ENCODE measurements at regions of chr2 and their contacts with region 1.

Region 1: DNA sequence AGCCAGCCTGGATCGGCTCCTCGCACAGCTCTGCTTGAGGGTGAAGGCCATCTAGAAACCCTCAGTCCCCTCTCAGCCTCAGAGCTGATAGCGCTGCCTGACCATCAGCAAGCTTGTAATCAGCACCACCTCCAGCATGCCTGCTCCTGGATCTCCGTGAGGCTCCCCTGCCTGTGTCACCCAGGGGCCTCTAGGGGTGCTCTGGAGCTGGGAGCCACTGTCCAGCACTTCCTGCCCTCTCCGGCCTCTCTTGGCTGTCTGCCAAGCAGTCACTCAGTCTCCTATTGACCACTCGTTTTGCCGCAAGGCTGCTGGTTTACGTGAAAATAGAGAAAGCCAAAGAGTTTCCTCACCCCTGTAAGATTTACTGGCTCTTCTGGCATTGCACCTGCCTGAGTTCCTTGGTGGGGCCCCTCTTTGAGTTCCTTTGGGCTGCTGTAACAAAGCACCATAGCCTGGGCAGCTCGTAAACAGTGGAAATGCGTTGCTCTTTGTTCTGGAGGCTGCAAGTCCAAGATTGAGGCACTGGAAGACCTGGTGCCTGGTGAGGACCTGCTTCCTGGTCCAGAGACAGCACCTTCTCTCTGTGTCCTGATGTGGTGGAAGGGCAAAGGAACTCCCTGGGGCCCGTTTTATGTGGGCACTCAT is 17.9 kb downstream of the CAPN10 start:
- DNase-seq: no peak
- H3K4me3 ChIP-seq: no peak overlapping the region
- H3K27ac ChIP-seq: no peak overlapping the region
- H3K4me1 ChIP-seq: no peaks in the 10 kb centered on the region
- H3K27me3 ChIP-seq: no peaks in the 10 kb centered on the region
- CTCF ChIP-seq: peak in 1 of 3 donors; percentile 18
- POLR2A ChIP-seq: no peak

Region 2: DNA sequence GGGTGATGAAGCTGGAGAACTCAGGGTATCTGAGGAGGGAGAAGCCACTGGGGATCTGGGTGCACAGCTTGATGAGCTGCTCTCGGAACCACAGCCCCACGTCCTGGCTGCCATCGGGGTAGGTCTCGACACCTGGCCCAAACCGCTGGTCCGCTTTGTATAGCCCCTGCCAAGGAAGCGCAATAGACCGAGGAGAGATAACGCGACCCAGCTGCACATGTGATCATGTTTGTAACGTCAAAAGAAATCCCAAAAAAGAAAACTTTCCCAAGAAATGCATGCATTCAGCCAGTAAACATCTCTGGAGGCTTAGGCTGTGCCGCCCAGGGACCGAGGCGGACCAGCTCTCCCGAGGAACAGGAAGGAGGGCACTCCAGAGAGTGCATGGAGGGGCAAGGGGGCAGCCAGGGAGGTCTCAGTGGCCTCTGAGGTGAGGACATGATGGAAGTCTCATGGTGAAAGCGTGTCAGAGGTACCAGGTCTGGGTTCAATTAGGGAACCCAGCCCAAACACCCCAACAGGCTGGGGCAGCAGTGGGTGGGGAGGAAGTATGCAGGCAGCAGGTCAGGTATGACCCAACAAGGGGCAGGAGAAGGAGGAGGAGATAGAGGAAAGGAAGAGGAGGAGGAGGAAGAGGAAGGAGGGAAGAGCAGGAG is 74.9 kb before region 1 on chr2:
- intact Hi-C with region 1: loop called (anchors 2 kb)
- DNase-seq: peak in 1 of 2 donors; percentile 27
- H3K4me3 ChIP-seq: no peak overlapping the region
- H3K27ac ChIP-seq: no peak overlapping the region
- H3K4me1 ChIP-seq: no peaks in the 10 kb centered on the region
- H3K27me3 ChIP-seq: no peaks in the 10 kb centered on the region
- CTCF ChIP-seq: no peak
- POLR2A ChIP-seq: no peak